WTC11 (cell line): ENCODE measurements at regions of chr11 and their contacts with region 1.

Region 1: DNA sequence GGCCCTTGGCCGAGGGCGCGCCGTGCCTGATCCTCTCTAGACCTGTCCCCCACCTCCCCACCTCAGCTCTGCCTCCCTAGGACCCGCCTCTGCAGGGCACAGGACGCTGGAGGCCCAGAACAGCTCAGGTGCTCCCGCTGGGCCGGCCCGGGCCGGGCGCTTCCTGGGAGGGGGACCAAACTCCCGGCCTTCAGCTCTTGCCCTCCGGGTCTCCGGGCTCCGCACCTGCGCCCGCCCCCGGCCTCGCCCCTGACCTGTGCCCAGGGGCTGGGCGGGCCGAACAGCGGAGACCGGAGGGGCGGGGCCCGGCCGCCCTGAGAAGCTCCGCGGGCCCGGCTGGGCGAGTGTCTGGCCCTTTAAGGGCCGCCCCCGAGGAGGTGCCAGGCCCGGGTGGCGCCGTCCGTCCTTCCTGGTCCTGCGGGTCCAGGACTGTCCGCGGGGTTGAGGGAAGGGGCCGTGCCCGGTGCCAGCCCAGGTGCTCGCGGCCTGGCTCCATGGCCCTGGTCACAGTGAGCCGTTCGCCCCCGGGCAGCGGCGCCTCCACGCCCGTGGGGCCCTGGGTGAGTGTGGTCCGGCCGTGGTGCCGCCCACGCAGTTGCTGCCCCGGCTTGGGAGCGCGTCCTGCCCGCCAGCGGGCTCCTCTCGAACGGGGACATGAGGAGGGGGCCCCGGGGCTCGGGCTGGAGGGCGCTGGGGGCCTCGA is at the start of gene SSH3:
- DNase-seq: peak; percentile 78
- ATAC-seq: peak; percentile 82
- H3K4me3 Mint-ChIP-seq: peak within 1 kb of the TSS; percentile 74
- H3K27ac Mint-ChIP-seq: peak within 1 kb of the TSS; percentile 57
- H3K4me1 Mint-ChIP-seq: peaks cover 11% of the 10 kb centered on the region
- H3K27me3 Mint-ChIP-seq: peaks cover 4% of the 10 kb centered on the region; the same call in 1 of the 2 replicates
- CTCF ChIP-seq: no peak
- total RNA-seq, gene SSH3: 34.8 to 43.4 TPM (median 42.3 TPM) in 3 replicates

Region 2: DNA sequence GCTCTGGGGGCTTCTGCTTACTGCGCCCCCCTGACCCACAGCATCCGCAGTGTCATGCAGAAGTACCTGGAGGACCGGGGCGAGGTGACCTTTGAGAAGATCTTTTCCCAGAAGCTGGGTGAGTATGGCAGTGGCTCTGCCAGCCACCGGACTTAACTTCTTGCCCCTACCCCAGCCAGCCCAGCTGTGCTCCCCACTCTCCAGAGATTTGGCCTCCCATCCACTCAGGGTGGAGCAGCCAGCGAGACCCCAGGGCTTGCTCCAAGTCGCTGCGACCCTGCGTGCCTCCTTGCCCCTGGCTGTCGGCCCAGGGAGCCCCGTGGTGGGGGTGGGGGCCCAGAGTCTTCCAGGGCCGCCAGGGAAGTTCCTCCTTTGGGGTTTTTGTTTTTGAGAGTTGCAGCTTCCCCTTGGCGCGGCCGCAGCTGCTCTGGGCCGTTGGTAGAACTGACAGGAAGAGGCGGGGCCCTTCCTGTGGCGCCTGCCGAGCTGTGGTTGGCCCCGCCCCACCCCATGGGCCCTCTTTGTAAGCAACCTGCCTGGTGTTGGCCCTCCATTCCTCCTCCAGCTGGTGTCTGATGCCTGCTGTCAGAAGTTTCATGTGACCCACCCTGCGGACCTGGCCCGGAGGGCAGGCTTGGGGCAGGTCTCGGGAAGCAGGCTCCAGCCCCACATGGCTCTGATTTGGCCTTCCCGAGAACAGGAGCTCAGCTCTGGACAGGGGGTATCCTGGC is 25.9 kb before region 1 on chr11:
- CTCF ChIA-PET with region 1: interaction called, 12 read pairs
- POLR2A ChIA-PET with region 1: interaction called, 5 read pairs
- DNase-seq: peak; percentile 83
- ATAC-seq: peak; percentile 84
- H3K4me3 Mint-ChIP-seq: peak overlapping the region; percentile 30; the same call in 1 of the 2 replicates
- H3K27ac Mint-ChIP-seq: peak overlapping the region; percentile 95
- H3K4me1 Mint-ChIP-seq: peaks cover 26% of the 10 kb centered on the region
- H3K27me3 Mint-ChIP-seq: no peaks in the 10 kb centered on the region
- CTCF ChIP-seq: no peak

Region 3: GRCh38 chr11:67288452-67289225 is 14.6 kb before region 1 on chr11:
- CTCF ChIA-PET with region 1: interaction called, 22 read pairs
- POLR2A ChIA-PET with region 1: interaction called, 24 read pairs
- DNase-seq: peak; percentile 83
- ATAC-seq: peak; percentile 88
- H3K4me3 Mint-ChIP-seq: peak overlapping the region; percentile 66
- H3K27ac Mint-ChIP-seq: peak overlapping the region; percentile 95; the same call in 1 of the 2 replicates
- H3K4me1 Mint-ChIP-seq: peaks cover 15% of the 10 kb centered on the region
- H3K27me3 Mint-ChIP-seq: no peaks in the 10 kb centered on the region
- CTCF ChIP-seq: peak; percentile 26; the same call in 1 of the 2 replicates

Region 4: GRCh38 chr11:67382276-67383136 is 79.2 kb after region 1 on chr11:
- CTCF ChIA-PET with region 1: interaction called, 13 read pairs
- POLR2A ChIA-PET with region 1: no interaction called
- DNase-seq: peak; percentile 90
- ATAC-seq: peak; percentile 85
- H3K4me3 Mint-ChIP-seq: no peak overlapping the region
- H3K27ac Mint-ChIP-seq: no peak overlapping the region; the same call in 1 of the 2 replicates
- H3K4me1 Mint-ChIP-seq: peaks cover 17% of the 10 kb centered on the region
- H3K27me3 Mint-ChIP-seq: peaks cover 52% of the 10 kb centered on the region
- CTCF ChIP-seq: peak; percentile 90

Region 5: GRCh38 chr11:67523556-67524479 is 220.5 kb after region 1 on chr11:
- CTCF ChIA-PET with region 1: no interaction called
- POLR2A ChIA-PET with region 1: no interaction called
- DNase-seq: no peak
- ATAC-seq: no peak
- H3K4me3 Mint-ChIP-seq: no peak overlapping the region
- H3K27ac Mint-ChIP-seq: no peak overlapping the region
- H3K4me1 Mint-ChIP-seq: no peaks in the 10 kb centered on the region
- H3K27me3 Mint-ChIP-seq: peaks cover 5% of the 10 kb centered on the region; the same call in 1 of the 2 replicates
- CTCF ChIP-seq: no peak